Naive thymus-derived CD4-positive, alpha-beta T cell (primary cell): ENCODE measurements at regions of chr1 and their contacts with region 1.

Region 1: DNA sequence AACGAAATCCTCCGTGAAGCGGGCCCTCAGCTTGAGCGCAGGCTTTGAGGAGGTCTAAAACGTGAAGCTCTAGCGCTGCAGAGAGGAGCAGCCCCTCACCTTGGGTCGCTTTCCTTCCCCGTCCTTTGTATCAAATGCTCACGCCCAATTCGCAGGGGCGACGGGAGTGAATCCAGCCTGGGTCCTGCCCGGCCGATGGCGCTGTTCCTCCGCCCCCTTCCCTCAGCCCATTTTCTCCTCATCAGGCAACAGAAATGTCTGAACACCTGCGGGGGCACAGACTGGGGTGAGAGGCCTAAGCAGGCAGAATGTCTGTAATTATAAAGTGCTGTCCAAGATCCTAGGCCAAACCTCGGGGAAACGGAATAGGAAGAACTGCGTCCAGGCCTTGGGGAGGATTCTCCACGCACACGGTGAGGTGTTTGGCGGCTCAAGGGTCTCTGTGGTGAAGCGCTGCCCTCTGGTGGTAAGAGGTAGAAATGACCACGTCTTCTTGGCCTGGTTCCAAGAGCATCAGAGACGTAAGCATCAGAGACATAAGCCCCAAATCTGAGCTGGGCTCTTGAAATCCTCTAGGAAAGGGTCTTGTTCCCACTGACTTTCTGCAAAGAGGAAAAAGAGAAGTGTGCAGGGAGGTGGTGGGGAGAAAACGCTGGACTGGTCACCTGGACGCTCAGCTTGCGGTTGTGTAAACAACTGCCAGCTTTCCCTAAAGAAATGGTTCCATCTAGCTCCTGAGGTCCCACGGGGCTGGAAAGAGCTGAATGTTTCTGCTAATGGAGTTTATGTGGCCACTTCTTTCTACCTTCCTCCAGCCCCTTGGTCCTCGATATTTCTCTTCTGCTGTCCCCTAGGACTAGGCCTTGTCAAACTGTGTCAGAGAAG is 92.1 kb upstream of the CD53 start:
- DNase-seq: peak; percentile 48 to 83 (median 74)
- ATAC-seq: peak; percentile 88
- H3K4me3 ChIP-seq: no peak overlapping the region
- H3K4me3 Mint-ChIP-seq: peak overlapping the region in 5 of 10 donors; percentile 29 to 61 (median 42)
- H3K27ac ChIP-seq: no peak overlapping the region
- H3K27ac Mint-ChIP-seq: peak overlapping the region in 5 of 9 donors; percentile 2 to 82 (median 34)
- H3K4me1 ChIP-seq: peaks cover 31 to 40% of the 10 kb centered on the region in 2 donors
- H3K4me1 Mint-ChIP-seq: peaks cover 18 to 54% (median 45%) of the 10 kb centered on the region in 7 donors
- H3K27me3 ChIP-seq: no peaks in the 10 kb centered on the region
- H3K27me3 Mint-ChIP-seq: peaks cover 0 to 28% (median 0%) of the 10 kb centered on the region in 5 donors

Region 2: DNA sequence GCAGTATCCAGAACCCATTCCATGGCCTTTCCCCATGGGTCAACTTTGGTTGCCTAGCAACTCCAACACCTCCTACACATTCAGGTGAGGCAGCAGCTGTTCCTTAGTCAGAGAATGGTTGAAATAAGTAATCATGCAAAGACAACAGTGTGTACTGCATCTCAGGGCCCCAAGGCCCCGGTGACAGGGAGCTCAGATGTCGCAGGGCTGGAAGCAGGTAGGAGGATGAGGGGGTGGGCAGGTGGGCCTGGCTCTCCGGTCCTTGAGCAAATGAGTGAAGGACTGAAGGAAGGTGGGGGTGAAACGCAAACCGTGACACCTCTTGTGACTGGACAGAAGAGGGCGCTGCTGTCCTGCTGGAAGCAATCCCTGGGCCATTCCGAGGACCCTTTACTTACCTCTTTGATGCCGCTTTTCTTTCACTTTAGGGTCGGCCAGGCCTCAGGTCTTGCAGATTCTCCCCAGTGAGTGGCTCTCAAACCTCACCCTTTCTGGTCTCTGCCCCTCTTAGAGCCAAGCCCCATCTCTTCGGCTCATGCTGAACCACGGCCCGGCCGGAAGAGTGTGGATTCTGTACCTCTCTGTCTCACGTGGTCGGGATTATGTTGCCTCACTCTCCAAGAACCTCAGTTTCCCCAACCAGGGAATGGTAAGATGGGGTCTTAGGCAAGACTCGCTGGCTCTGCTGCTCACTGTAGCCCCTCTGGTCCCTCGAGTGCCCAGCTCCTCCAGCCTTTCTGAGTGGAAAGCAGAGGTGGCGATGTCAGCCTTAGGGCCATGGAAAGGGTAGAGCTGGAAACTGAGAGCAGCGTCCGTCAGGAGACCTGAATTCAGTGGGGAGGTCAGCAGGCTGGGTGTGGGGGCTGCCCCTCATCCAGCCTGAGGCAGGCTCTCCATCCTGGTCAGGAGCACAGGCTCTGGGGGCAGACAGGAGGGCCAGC is 256.3 kb before region 1 on chr1:
- CTCF ChIA-PET with region 1: interaction called, 3 read pairs
- POLR2A ChIA-PET with region 1: no interaction called
- intact Hi-C with region 1: loop called (anchors 1 kb)
- DNase-seq: peak in 8 of 9 donors; percentile 15 to 47 (median 35)
- ATAC-seq: peak; percentile 74
- H3K4me3 ChIP-seq: no peak overlapping the region
- H3K4me3 Mint-ChIP-seq: peak overlapping the region in 2 of 10 donors; percentile 15 to 39
- H3K27ac ChIP-seq: no peak overlapping the region
- H3K27ac Mint-ChIP-seq: no peak overlapping the region
- H3K4me1 ChIP-seq: no peaks in the 10 kb centered on the region
- H3K4me1 Mint-ChIP-seq: peaks cover 0 to 7% (median 4%) of the 10 kb centered on the region in 7 donors
- H3K27me3 ChIP-seq: no peaks in the 10 kb centered on the region
- H3K27me3 Mint-ChIP-seq: peaks cover 21 to 51% (median 25%) of the 10 kb centered on the region in 5 donors

Region 3: GRCh38 chr1:110766025-110766647 is 14.7 kb before region 1 on chr1:
- CTCF ChIA-PET with region 1: interaction called, 63 read pairs
- POLR2A ChIA-PET with region 1: interaction called, 3 read pairs
- intact Hi-C with region 1: loop called (anchors 1 kb)
- DNase-seq: peak in 7 of 9 donors; percentile 27 to 74 (median 61)
- ATAC-seq: peak; percentile 85
- H3K4me3 ChIP-seq: no peak overlapping the region
- H3K4me3 Mint-ChIP-seq: peak overlapping the region in 1 of 10 donors; percentile 21
- H3K27ac ChIP-seq: no peak overlapping the region
- H3K27ac Mint-ChIP-seq: no peak overlapping the region
- H3K4me1 ChIP-seq: no peaks in the 10 kb centered on the region
- H3K4me1 Mint-ChIP-seq: peaks cover 0 to 12% (median 5%) of the 10 kb centered on the region in 7 donors
- H3K27me3 ChIP-seq: no peaks in the 10 kb centered on the region
- H3K27me3 Mint-ChIP-seq: peaks cover 0 to 52% (median 8%) of the 10 kb centered on the region in 5 donors

Region 4: DNA sequence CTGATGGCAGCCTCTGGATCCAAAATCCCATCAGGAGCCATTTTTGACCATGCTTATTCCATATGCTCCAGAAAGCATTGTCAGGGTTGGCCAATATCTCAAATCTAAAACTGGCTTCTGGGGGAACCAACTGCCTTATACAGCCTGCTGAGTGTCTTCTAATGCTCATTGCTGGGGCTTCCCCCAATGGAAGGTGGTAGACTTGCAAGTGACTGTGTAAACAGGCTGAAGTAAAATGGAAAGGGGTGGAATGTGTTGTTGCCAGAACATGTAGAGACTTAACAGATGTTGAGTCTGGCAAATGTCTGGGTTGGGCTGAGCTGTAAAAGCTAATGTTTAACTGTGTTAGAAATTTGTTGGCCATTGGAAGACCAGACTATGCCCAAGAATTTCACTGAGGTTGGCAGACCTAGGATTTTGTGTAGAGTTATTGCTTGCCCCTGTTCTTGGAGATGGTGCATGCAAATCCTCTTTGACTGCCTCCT is 205.6 kb after region 1 on chr1:
- CTCF ChIA-PET with region 1: interaction called, 14 read pairs
- POLR2A ChIA-PET with region 1: no interaction called
- intact Hi-C with region 1: no loop called
- DNase-seq: no peak
- ATAC-seq: no peak
- H3K4me3 ChIP-seq: no peak overlapping the region
- H3K4me3 Mint-ChIP-seq: no peak overlapping the region
- H3K27ac ChIP-seq: no peak overlapping the region
- H3K27ac Mint-ChIP-seq: no peak overlapping the region
- H3K4me1 ChIP-seq: peaks cover 0 to 17% of the 10 kb centered on the region in 2 donors
- H3K4me1 Mint-ChIP-seq: peaks cover 0 to 10% (median 7%) of the 10 kb centered on the region in 7 donors
- H3K27me3 ChIP-seq: no peaks in the 10 kb centered on the region
- H3K27me3 Mint-ChIP-seq: peaks cover 0 to 29% (median 9%) of the 10 kb centered on the region in 5 donors